Posterior vena cava (tissue), 2 donors: ENCODE measurements at regions of chr18 and their contacts with region 1.

Region 1: DNA sequence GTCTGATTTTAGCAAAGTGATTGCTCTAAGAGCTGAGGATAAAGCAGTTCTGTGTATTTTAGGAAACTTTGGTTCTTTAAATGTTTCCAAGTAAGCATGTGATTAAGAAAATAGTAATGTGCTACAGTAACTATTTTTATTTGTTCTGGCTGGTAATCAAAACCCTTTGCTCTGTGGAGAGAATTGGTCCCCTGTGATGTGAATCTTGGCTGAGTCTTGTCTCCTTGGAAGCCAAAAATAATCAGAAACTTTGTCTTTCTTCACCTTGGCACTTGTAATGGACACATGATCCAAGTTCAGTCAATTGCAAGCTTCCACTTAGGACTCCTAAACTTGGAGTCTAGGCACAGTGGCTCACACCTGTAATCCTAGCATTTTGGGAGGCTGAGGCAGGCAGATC is 422.7 kb upstream of the CDH20 start:
- DNase-seq: no peak

Region 2: DNA sequence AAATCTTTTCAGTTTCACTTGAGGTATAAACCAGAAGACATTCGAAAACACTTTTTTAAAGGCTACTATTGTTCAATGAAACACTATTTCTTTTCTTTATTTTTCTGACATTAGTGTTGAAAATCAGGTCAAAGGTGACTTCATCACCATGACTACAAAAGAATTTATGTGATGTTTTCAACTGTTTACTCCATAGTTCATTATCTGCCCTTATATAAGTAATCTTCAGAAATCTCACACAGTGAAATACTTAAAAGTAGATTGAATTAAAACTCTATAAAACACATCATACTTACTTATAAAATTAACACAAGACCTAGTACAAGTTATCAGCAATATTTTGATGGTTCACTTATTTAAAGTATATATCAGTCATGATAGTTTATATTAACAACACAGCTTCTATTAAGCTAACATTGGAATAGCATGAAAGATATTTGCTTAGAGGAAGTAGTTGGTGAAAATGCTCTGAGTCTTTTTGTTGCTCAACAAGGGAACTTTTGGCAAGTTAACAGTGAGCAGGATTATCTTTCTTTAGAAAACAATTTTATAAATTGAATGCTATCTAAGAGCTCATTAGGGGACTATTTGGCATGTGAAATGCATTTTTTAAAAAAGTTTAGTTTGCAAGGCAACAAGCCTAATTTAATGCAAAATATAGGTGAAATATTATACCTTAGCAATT is 598.7 kb before region 1 on chr18:
- intact Hi-C with region 1: loop called in 1 of 2 experiments (anchors 5 kb)
- DNase-seq: no peak

Region 3: DNA sequence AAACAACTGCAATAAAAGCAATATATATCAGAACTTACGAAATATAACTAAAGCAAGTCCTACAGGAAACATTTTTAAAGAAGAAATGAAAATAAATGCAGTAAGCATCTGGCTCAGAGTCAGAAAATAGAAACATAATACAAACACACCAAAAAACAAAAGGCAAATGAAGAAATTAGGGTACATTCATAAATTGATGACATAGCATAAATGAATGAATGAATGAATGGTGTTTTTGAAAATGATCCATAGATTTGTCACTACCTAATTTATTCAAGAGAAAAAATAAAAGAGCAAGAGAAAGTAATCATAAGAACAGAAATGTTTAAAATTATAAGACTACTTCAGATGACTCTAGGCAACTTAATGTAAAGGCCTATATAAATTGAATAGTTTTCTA is 196.6 kb after region 1 on chr18:
- intact Hi-C with region 1: no loop called
- DNase-seq: no peak

Region 4: DNA sequence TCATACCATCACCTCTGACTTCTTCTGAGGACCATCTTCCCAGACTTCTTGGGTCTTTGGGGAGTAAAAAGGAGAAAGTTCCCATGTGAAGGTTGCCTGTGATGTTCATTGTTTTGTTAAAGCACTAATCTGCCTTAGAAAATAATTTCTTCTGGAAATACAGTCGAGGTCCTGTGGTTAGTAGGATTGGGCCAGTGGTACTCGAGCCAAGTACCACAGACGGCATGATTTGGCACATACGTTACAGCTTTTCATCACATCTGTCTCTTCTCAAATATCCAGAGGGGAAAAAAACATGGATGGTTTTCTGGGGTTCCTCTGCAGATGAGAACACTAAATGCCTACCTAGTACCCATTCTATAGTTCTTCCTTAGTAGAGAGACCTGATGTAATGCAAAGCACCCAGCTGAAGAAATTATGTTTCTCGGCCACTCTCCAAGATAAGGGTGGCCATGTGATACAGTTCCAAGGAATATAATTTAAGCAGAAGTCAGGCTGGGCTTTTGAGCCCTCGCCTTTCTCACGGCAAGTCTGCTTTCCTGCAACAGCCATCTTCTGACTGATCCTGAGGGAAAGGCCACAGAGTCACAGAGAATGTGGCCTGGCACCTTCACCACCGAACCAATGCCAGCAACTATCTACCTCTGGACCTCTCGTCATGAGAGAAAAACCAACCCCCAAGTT is 821.3 kb after region 1 on chr18:
- intact Hi-C with region 1: loop called in 1 of 2 experiments (anchors 5 kb)
- DNase-seq: no peak